ENCODE measurements at regions of chr6 and their contacts with region 1.

Region 1: DNA sequence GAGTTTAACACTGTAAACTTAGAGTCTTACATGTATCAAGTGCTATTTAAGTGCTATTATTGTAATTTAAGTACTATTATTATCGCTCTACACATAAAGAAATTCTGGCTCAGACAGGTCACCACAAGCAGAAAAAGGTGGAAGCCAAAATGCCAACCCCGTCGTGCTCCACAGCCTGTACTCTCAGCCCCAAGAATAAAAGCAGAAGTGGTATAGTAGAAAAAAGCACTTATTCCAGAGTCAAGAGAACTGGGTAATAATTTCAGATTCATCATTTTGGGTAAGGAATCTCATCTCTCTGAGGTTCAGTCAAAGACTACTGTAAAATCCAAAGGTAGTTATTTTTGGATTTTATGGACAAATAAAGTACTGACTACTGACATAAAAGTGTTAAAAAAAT is 943 bp downstream of the ZUP1 start:
- DNase-seq: no peak
- ATAC-seq: no peak
- H3K4me3 Mint-ChIP-seq: peak overlapping the region; percentile 98
- H3K27ac Mint-ChIP-seq: peak overlapping the region; percentile 44
- H3K4me1 Mint-ChIP-seq: peaks cover 29% of the 10 kb centered on the region
- H3K27me3 Mint-ChIP-seq: no peaks in the 10 kb centered on the region

Region 2: GRCh38 chr6:116570856-116571682 is 96.6 kb before region 1 on chr6 and contains the start of gene RWDD1:
- POLR2A ChIA-PET with region 1: interaction called, 10 read pairs
- DNase-seq: peak; percentile 95
- ATAC-seq: peak; percentile 93
- H3K4me3 Mint-ChIP-seq: peak within 1 kb of the TSS; percentile 97
- H3K27ac Mint-ChIP-seq: peak within 1 kb of the TSS; percentile 98
- H3K4me1 Mint-ChIP-seq: peaks cover 27% of the 10 kb centered on the region
- H3K27me3 Mint-ChIP-seq: no peaks in the 10 kb centered on the region
- total RNA-seq, gene RWDD1: 33.2 to 36.6 TPM

Region 3: GRCh38 chr6:116680975-116681808 is 13.6 kb after region 1 on chr6 and contains the start of gene KPNA5:
- POLR2A ChIA-PET with region 1: interaction called, 23 read pairs
- DNase-seq: peak; percentile 90
- ATAC-seq: peak; percentile 96
- H3K4me3 Mint-ChIP-seq: peak within 1 kb of the TSS; percentile 97
- H3K27ac Mint-ChIP-seq: peak within 1 kb of the TSS; percentile 99
- H3K4me1 Mint-ChIP-seq: peaks cover 16% of the 10 kb centered on the region
- H3K27me3 Mint-ChIP-seq: no peaks in the 10 kb centered on the region
- total RNA-seq, gene KPNA5: 29.5 to 35.0 TPM

Region 4: GRCh38 chr6:116840091-116840490 is 172.5 kb after region 1 on chr6:
- POLR2A ChIA-PET with region 1: no interaction called
- DNase-seq: no peak
- ATAC-seq: no peak
- H3K4me3 Mint-ChIP-seq: no peak overlapping the region
- H3K27ac Mint-ChIP-seq: no peak overlapping the region
- H3K4me1 Mint-ChIP-seq: no peaks in the 10 kb centered on the region
- H3K27me3 Mint-ChIP-seq: peaks cover 3% of the 10 kb centered on the region